Mucosa of descending colon (tissue), 3 donors: ENCODE measurements at regions of chr13 and their contacts with region 1.

Region 1: DNA sequence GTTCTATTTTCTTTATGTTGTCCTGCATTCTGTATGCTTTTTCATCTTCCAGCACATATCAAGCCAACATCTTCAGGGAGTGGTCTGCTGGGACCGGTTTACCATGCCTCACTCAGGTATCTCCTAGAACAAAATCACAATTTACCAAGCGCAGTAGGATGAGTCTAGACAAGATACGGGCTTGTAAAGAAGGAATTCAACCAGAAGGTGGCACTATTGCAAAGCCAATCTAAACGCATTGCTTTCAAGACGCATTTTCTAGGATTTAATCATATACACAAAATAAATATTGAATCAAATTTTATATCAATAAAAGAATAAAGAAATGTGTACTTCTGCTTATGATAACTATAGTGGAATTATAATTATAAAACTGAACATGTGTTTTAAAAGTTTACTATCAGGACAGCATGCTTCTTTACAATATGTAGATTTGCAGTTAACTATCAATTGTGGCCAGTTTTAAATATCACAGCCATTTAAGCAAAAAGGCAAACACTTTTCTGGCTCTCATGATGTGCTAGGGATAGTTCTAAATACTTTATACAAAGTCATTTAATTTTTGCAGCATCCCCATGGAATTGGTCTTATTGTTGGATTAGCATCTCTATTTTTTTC is 16.1 kb upstream of the TPP2 start:
- DNase-seq: peak in 1 of 3 donors; percentile 77
- ATAC-seq: peak; percentile 74
- H3K4me3 ChIP-seq: no peak overlapping the region
- H3K4me1 ChIP-seq: no peaks in the 10 kb centered on the region
- CTCF ChIP-seq: peak; percentile 61

Region 2: GRCh38 chr13:102854675-102855074 is 274.0 kb after region 1 on chr13:
- intact Hi-C with region 1: loop called in 1 of 2 experiments (anchors 10 kb)
- DNase-seq: peak in 1 of 3 donors; percentile 22
- ATAC-seq: peak; percentile 34
- H3K4me3 ChIP-seq: no peak overlapping the region
- H3K4me1 ChIP-seq: peaks cover 3% of the 10 kb centered on the region
- CTCF ChIP-seq: no peak

Region 3: DNA sequence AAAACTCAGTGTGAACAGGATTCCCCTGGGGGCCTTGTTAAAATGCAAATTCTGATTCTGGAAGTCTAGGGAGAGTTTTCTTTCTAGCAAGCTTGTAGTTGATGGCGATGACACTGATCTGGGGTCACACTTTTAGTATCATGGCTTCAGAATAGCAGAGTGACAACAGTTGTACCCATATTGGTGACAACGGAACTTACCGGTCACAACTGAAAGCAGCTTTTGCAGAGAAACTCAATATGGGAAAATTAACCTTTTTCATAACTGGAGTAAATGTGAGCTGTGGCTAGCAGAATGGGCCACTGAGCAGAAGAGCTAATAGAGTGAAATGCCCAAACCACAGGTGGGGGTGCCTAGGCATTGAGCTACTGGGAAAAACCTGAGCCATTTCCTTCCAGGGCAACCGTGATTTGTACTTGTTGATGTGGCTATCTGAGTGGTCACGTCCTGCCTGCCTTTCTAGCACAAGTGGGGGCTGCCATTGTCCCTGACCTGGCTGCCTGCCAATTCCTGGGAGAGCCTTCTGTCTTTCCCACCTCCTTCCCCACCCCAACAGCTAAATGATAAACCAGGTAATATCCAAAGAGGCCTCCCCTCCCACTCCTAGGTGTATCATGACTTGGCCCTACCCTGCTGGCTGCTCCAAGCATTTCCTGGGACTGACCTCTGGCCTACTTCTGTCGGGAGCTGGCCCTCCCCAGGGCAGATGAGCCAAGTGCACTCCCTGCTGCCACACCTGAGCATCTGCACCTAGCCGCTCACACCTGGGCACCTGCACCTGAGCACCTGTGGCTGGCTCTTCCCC is 487.3 kb after region 1 on chr13:
- intact Hi-C with region 1: no loop called
- DNase-seq: peak; percentile 60 to 75 (median 62)
- ATAC-seq: peak; percentile 96
- H3K4me3 ChIP-seq: no peak overlapping the region
- H3K4me1 ChIP-seq: no peaks in the 10 kb centered on the region
- CTCF ChIP-seq: no peak